GM10248 (cell line): ENCODE measurements at regions of chr1 and their contacts with region 1.

Region 1: DNA sequence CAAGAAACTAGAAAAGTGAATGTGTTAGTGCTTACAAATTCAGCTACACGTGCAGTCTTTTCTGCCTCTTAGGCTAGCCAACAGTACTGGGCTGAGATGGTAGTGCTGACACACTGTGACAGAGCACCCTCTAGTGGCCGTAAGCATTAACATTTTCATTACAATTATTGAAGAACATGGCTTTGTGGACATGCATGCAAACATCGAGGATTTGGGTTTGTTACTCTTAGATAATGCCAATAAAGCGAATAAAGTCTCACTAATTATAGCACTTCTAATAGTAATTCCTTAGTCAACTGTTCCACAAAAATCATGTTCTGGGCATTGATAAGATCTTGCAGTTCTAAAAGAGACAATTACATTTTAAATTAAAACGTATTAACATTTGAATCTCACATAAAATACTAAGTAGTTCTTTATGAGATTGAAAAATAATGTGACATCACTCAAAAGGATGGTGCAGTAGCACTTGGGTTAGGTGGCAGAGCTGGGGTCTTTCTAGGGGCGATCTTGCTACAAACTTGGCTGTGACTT is 47.1 kb downstream of the MYSM1 start:
- DNase-seq: peak; percentile 65
- CTCF ChIP-seq: peak; percentile 67

Region 2: DNA sequence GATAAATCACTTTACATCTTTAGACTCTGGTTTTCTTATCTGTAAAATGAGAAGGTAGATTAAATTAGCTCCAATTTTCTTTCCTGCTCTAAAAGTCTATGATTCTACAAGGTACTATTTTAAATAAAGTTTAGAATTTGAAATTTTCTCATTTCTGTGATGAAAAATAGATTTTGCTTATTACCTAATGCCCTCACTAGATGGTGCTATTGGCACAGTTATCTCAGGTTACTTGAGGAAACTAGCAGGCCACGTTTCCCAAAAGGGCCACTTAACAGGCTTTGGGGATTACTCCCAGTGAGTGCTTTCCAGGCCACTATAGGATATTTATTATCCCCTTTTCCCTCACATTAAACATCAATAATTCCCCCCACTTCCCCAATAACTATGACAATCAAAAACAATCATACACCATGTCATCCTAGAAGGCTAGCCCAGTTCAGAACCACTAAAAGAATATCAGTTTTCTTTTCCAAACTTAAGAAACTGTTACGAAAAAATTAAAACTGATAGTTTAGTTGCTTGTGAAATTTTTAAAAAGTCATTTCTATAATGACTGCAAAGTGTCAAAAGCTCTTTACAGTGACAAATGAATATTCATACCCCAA is 136.8 kb before region 1 on chr1:
- CTCF ChIA-PET with region 1: interaction called, 122 read pairs
- POLR2A ChIA-PET with region 1: no interaction called
- DNase-seq: peak; percentile 40
- CTCF ChIP-seq: peak; percentile 64

Region 3: DNA sequence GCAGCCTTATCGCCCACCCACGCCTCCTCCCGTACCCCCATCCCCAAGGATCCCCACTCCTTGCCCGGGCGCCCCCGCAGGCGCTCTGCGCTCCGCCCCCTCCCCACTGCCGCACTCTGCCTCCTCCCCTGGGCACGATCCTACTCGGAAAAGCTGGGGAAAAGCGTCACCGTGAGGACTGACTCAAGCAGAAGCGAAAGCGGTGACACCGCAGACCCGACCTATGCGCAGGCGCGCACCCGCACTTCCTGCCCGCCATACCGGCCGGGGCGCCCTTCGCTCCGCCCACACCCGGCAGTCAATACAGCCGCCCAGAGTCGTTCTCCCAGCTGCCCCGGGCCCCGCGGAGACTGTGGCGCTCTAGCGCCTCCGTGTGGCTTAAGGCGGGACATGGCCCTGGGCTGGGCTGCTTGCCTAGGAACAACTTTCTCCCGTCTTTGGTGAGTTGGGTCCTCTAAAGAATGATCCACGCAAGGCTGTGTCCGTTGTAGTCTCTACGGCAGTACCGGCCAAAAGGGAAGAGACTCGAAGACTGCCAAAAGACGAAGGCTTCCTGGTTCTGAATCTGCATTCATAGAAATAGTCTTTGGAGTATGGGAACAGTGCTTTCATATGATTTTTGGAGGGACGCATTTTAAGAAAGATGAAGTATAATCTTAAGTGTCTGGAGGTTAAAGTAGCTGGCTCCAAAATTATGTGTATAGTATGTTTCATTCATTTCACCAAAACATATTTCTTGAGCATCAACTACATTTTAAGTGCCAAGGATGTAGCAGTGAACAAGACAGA is 106.0 kb before region 1 on chr1 and contains the start of gene OMA1:
- CTCF ChIA-PET with region 1: interaction called, 20 read pairs
- POLR2A ChIA-PET with region 1: interaction called, 3 read pairs
- DNase-seq: peak; percentile 97
- CTCF ChIP-seq: peak; percentile 98

Region 4: GRCh38 chr1:58664881-58665280 is 12.2 kb after region 1 on chr1:
- CTCF ChIA-PET with region 1: interaction called, 38 read pairs
- POLR2A ChIA-PET with region 1: no interaction called
- DNase-seq: no peak
- CTCF ChIP-seq: no peak

Region 5: DNA sequence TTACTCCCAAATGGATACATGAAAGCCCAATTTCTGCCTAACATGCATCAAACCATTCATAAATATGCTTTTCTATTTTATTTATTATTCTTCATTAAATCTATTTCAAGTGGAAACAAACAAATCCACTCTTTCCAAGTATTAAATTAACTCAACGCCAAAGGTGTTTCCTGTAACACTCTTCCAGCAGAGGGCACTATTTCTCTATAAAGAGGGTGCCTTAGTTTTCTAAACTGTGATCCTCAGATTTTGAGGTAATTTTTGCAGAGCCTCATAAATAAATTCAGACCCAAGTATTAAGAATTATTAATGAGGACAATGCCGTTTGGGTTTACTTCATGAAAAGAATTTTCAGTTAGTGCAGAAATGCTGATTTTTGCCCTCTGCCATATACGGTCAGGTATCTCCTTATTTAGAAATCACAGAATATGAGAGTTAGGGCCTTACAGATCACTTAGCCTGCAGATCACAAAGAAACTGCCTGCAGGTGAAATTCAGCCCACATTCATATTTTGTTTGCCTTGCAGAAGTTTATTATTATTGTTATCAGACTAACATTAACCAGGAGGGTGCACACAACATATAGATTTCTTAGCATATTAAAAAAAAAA is 87.2 kb after region 1 on chr1:
- CTCF ChIA-PET with region 1: no interaction called
- POLR2A ChIA-PET with region 1: no interaction called
- DNase-seq: peak; percentile 70
- CTCF ChIP-seq: peak; percentile 56

Region 6: GRCh38 chr1:58941471-58942289 is 289.0 kb after region 1 on chr1:
- CTCF ChIA-PET with region 1: no interaction called
- POLR2A ChIA-PET with region 1: no interaction called
- DNase-seq: no peak
- CTCF ChIP-seq: no peak

Region 7: GRCh38 chr1:59759156-59759925 is 1106.6 kb after region 1 on chr1:
- CTCF ChIA-PET with region 1: interaction called, 13 read pairs
- POLR2A ChIA-PET with region 1: no interaction called
- DNase-seq: peak; percentile 82
- CTCF ChIP-seq: peak; percentile 87